Stomach (tissue), 19 donors: ENCODE measurements at regions of chr2 and their contacts with region 1.

Region 1: GRCh38 chr2:119759451-119760236 is at the start of gene PTPN4:
- DNase-seq: peak; percentile 97 to 99
- H3K4me3 ChIP-seq: peak within 1 kb of the TSS; percentile 75 to 84 (median 80)
- H3K27ac ChIP-seq: peak within 1 kb of the TSS; percentile 93 to 97 (median 95)
- H3K4me1 ChIP-seq: peaks cover 6 to 48% (median 23%) of the 10 kb centered on the region in 4 donors
- H3K27me3 ChIP-seq: no peaks in the 10 kb centered on the region
- CTCF ChIP-seq: peak in 1 of 7 experiments; percentile 24
- EP300 ChIP-seq: no peak
- POLR2A ChIP-seq: peak in 2 of 4 donors; percentile 20 to 77
- total RNA-seq, gene PTPN4: 8.1 to 450 (median 52.5) TPM

Region 2: GRCh38 chr2:119826370-119826961 is 66.8 kb after region 1 on chr2:
- intact Hi-C with region 1: loop called (anchors 10 kb)
- DNase-seq: peak in 1 of 2 donors; percentile 61
- H3K4me3 ChIP-seq: no peak overlapping the region
- H3K27ac ChIP-seq: no peak overlapping the region
- H3K4me1 ChIP-seq: peaks cover 0 to 8% (median 0%) of the 10 kb centered on the region in 4 donors
- H3K27me3 ChIP-seq: no peaks in the 10 kb centered on the region
- CTCF ChIP-seq: peak in 4 of 7 experiments; percentile 13 to 24 (median 18)
- EP300 ChIP-seq: no peak
- POLR2A ChIP-seq: no peak